Activated CD4-positive, alpha-beta T cell treated with anti-CD3 and anti-CD28 coated beads, Interleukin-2, amount 10 ng/mL, durations not matched to agents 7 days and 5 days (primary cell): ENCODE measurements at regions of chr4 and their contacts with region 1.

Region 1: DNA sequence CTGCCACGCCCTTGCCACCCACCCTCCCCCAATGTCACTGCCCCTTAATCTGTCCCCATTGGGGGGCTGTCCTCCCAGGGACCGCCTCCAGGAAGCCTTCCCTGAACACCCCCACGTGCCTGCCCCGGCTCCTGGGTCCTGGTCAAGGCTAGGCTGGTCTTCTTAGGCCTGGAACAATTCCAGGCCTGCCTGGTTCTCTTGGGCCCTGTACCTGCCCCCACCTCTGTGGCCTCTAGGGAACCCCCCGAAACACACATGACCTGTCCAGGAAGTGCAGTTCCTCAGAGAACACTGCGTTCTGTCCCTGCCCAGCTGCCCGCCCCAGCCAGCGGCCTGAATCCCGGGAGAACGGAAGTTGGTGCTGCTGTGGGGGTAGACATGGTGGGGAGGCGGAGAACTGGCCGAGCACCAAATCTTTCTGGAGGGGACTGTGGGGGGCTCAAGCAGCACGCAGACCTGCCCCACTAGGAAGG is 5.1 kb downstream of the MXD4 start:
- DNase-seq: peak; percentile 4
- H3K4me3 Mint-ChIP-seq: no peak overlapping the region
- H3K27ac Mint-ChIP-seq: peak overlapping the region; percentile 74
- H3K4me1 Mint-ChIP-seq: no peaks in the 10 kb centered on the region
- H3K27me3 Mint-ChIP-seq: no peaks in the 10 kb centered on the region

Region 2: DNA sequence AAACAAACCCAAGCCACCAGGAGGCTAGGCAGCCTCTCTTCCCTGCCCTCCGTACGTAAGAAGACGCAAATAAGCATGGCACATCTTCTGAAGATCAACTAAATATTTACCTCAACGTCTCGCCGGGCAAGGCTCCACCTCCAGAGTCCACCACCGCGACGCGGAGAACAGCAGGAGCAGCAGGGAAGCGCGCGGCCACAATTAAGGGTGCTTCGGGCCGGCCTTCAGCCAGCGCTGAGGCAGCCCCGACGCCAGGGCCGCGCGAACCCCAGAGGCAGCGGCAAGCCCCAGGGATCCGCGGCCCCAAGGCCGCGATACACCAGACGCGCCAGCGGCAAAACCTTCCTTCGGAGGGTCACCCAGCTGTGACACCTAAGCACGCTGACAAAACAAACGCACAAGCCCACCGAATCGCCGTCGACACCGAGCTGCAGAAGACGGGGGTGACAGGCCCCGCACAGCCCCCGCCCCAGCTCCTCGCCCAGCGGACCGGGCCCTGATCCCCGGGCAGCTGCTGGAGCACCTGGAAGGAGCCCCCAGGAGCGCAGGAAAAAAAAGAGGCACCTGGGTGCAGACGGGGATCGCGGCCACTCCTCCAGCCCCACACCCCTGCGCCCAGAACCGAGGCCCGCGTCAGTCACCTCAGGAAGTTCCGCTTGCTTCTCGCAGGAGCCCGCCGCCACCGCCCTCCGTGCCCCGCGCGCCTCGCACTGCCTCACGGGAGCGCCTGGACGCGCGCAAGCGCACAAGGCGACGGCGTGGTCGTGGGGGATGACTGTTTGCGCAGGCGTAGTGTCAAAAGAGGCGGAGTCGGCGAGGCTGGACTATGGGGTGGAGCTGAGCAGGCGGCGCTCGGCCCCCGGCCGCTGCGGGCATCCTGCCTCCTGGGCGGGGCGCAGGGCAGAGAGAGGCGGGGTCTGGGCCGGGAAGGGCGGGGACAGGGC is 15.1 kb before region 1 on chr4 and contains the starts of genes HAUS3 and POLN:
- CTCF ChIA-PET with region 1: interaction called, 10 read pairs
- POLR2A ChIA-PET with region 1: interaction called, 5 read pairs
- DNase-seq: peak; percentile 99
- H3K4me3 Mint-ChIP-seq: peak within 1 kb of the TSS; percentile 92
- H3K27ac Mint-ChIP-seq: peak within 1 kb of the TSS; percentile 95
- H3K4me1 Mint-ChIP-seq: peaks cover 59% of the 10 kb centered on the region
- H3K27me3 Mint-ChIP-seq: no peaks in the 10 kb centered on the region
- total RNA-seq, gene HAUS3: 25.3 to 26.4 TPM
- total RNA-seq, gene POLN: 3.3 to 3.8 TPM